ENCODE measurements at regions of chr1 and their contacts with region 1.

Region 1: GRCh38 chr1:172089768-172090510 is 248.6 kb downstream of the DNM3 start:
- H3K4me3 Mint-ChIP-seq: no peak overlapping the region
- H3K27ac Mint-ChIP-seq: no peak overlapping the region
- H3K4me1 Mint-ChIP-seq: no peaks in the 10 kb centered on the region
- H3K27me3 Mint-ChIP-seq: no peaks in the 10 kb centered on the region

Region 2: DNA sequence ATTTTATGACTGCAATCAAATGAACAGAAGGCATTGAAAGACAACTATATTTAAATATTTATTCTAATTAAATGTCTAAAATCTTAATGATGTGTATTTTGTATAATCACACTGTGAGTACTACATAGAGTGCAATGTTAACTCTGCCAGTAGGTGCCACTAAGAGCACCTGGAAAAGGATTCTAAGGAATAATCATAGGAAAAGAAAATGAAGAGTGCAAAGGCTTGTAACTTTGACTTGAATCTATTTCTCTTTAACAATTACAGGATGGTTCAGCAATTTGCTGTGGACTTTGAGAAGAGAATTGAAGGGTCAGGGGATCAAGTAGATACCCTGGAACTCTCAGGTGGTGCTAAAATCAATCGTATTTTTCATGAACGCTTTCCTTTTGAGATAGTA is 48.2 kb before region 1 on chr1:
- intact Hi-C with region 1: loop called (anchors 5 kb)
- H3K4me3 Mint-ChIP-seq: no peak overlapping the region
- H3K27ac Mint-ChIP-seq: no peak overlapping the region
- H3K4me1 Mint-ChIP-seq: no peaks in the 10 kb centered on the region
- H3K27me3 Mint-ChIP-seq: no peaks in the 10 kb centered on the region